ENCODE measurements at regions of chr6 and their contacts with region 1.

Region 1: GRCh38 chr6:52020945-52021570 is 66.4 kb downstream of the PKHD1 start:
- DNase-seq: no peak
- H3K4me3 Mint-ChIP-seq: no peak overlapping the region
- H3K27ac Mint-ChIP-seq: no peak overlapping the region
- H3K4me1 Mint-ChIP-seq: no peaks in the 10 kb centered on the region
- H3K27me3 Mint-ChIP-seq: peaks cover 11% of the 10 kb centered on the region

Region 2: DNA sequence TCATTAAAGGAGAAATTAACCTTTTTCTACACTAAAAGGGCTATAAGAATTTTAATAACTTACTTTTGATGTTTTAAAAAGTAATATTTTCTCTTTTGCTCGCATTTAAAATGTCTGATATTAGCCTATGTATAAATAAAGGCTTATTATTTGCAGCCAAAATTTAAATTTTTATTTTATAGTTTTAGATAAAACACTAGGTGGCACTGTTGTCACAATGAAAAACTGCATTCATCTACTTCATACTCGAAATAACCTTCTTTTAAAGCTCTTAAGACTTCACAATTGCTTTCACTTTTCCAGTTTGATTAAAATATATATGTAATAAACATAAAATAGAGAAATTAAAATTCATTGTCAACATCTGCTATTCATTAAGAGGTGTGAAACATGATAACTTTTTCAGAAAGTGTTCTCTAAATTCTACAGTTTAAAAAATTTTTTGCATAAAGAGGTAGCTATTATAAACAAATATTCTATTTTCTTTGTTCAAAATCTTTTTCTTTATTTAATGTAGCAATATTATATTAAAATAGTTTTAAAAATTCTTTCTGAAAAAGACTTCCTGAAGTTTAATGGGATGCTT is 1892.5 kb before region 1 on chr6:
- CTCF ChIA-PET with region 1: no interaction called
- POLR2A ChIA-PET with region 1: no interaction called
- intact Hi-C with region 1: loop called (anchors 5 kb)
- DNase-seq: no peak
- H3K4me3 Mint-ChIP-seq: no peak overlapping the region
- H3K27ac Mint-ChIP-seq: no peak overlapping the region
- H3K4me1 Mint-ChIP-seq: no peaks in the 10 kb centered on the region
- H3K27me3 Mint-ChIP-seq: no peaks in the 10 kb centered on the region

Region 3: GRCh38 chr6:50816115-50816675 is 1204.9 kb before region 1 on chr6:
- CTCF ChIA-PET with region 1: interaction called, 4 read pairs
- POLR2A ChIA-PET with region 1: no interaction called
- intact Hi-C with region 1: loop called (anchors 1 kb)
- DNase-seq: peak; percentile 71
- H3K4me3 Mint-ChIP-seq: peak overlapping the region; percentile 74
- H3K27ac Mint-ChIP-seq: no peak overlapping the region
- H3K4me1 Mint-ChIP-seq: peaks cover 15% of the 10 kb centered on the region
- H3K27me3 Mint-ChIP-seq: peaks cover 56% of the 10 kb centered on the region

Region 4: GRCh38 chr6:51855310-51856082 is 165.6 kb before region 1 on chr6:
- CTCF ChIA-PET with region 1: interaction called, 4 read pairs
- POLR2A ChIA-PET with region 1: no interaction called
- intact Hi-C with region 1: loop called (anchors 1 kb)
- DNase-seq: no peak
- H3K4me3 Mint-ChIP-seq: no peak overlapping the region
- H3K27ac Mint-ChIP-seq: no peak overlapping the region
- H3K4me1 Mint-ChIP-seq: no peaks in the 10 kb centered on the region
- H3K27me3 Mint-ChIP-seq: peaks cover 12% of the 10 kb centered on the region

Region 5: DNA sequence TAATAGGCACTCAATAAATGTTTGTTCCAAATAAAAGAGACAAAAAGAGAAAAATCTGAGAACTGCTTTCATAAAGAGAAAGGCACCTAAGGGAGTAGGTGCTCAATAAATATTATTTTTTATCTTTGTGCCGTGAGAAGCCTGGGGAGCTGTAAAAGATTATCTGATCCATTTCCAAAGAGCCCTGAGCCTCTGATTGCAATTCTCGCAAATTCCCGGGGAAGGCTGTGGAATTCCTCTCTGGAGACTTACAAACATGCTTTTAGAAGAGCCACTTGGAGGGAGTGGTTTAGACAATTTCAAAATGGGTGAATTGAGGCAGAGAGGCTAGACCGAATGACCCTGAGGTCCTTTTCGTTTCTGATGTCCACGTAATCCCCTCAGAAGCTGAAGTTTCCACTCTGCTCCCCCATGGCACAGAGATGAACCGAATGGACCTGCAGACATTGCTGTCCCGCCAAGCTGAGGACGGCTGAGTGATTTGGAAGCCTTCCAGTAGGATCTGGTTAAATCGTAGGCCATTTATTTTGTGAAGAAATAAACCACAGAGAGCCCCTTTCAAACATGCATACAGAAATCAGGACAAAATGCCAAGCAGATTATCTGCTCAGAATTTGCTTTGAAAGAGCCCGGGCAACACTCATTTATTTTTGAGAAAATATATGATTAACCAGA is 11.5 kb before region 1 on chr6:
- CTCF ChIA-PET with region 1: interaction called, 26 read pairs
- POLR2A ChIA-PET with region 1: no interaction called
- intact Hi-C with region 1: no loop called
- DNase-seq: no peak
- H3K4me3 Mint-ChIP-seq: no peak overlapping the region
- H3K27ac Mint-ChIP-seq: no peak overlapping the region
- H3K4me1 Mint-ChIP-seq: no peaks in the 10 kb centered on the region
- H3K27me3 Mint-ChIP-seq: peaks cover 11% of the 10 kb centered on the region

Region 6: GRCh38 chr6:52049252-52050050 is 28.4 kb after region 1 on chr6:
- CTCF ChIA-PET with region 1: interaction called, 25 read pairs
- POLR2A ChIA-PET with region 1: no interaction called
- intact Hi-C with region 1: no loop called
- DNase-seq: no peak
- H3K4me3 Mint-ChIP-seq: no peak overlapping the region
- H3K27ac Mint-ChIP-seq: no peak overlapping the region
- H3K4me1 Mint-ChIP-seq: no peaks in the 10 kb centered on the region
- H3K27me3 Mint-ChIP-seq: peaks cover 7% of the 10 kb centered on the region